AG04450 (cell line): ENCODE measurements at regions of chr6 and their contacts with region 1.

Region 1: GRCh38 chr6:154675602-154676088 is 57.6 kb upstream of the SCAF8 start:
- DNase-seq: peak; percentile 94
- H3K4me3 ChIP-seq: no peak overlapping the region
- H3K27ac ChIP-seq: no peak overlapping the region
- H3K27me3 ChIP-seq: no peaks in the 10 kb centered on the region
- CTCF ChIP-seq: peak; percentile 99

Region 2: GRCh38 chr6:154156135-154156896 is 519.3 kb before region 1 on chr6:
- CTCF ChIA-PET with region 1: interaction called, 16 read pairs
- POLR2A ChIA-PET with region 1: no interaction called
- DNase-seq: no peak
- H3K4me3 ChIP-seq: no peak overlapping the region
- H3K27ac ChIP-seq: no peak overlapping the region
- H3K27me3 ChIP-seq: peaks cover 5% of the 10 kb centered on the region
- CTCF ChIP-seq: peak; percentile 79

Region 3: GRCh38 chr6:154638369-154638768 is 37.3 kb before region 1 on chr6:
- CTCF ChIA-PET with region 1: no interaction called
- POLR2A ChIA-PET with region 1: no interaction called
- DNase-seq: no peak
- H3K4me3 ChIP-seq: no peak overlapping the region
- H3K27ac ChIP-seq: no peak overlapping the region
- H3K27me3 ChIP-seq: peaks cover 3% of the 10 kb centered on the region
- CTCF ChIP-seq: no peak

Region 4: GRCh38 chr6:154690857-154691256 is 15.2 kb after region 1 on chr6:
- CTCF ChIA-PET with region 1: interaction called, 19 read pairs
- POLR2A ChIA-PET with region 1: no interaction called
- DNase-seq: no peak
- H3K4me3 ChIP-seq: no peak overlapping the region
- H3K27ac ChIP-seq: no peak overlapping the region
- H3K27me3 ChIP-seq: no peaks in the 10 kb centered on the region
- CTCF ChIP-seq: no peak

Region 5: GRCh38 chr6:154805288-154805911 is 129.8 kb after region 1 on chr6:
- CTCF ChIA-PET with region 1: interaction called, 304 read pairs
- POLR2A ChIA-PET with region 1: no interaction called
- DNase-seq: peak; percentile 32
- H3K4me3 ChIP-seq: no peak overlapping the region
- H3K27ac ChIP-seq: no peak overlapping the region
- H3K27me3 ChIP-seq: no peaks in the 10 kb centered on the region
- CTCF ChIP-seq: peak; percentile 57

Region 6: DNA sequence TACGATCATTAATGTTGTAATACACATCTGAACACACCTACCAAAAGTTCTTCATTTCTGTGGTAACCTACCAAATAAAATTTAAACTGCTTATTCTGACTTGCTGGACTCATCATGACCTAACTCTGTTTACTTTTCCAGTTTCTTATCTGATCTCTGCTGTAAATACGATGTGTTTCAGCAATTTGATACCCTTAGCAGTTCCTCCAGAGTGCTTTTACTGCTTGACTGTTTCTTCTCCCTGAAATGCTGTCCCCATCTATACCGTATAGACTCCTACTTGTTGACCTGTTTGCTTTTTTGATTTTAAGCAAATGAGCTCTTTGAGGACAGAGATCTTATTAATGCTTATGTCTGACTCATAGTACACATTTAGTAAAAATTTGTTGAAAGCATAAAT is 177.0 kb after region 1 on chr6:
- CTCF ChIA-PET with region 1: interaction called, 30 read pairs
- POLR2A ChIA-PET with region 1: no interaction called
- DNase-seq: peak; percentile 44
- H3K4me3 ChIP-seq: no peak overlapping the region
- H3K27ac ChIP-seq: no peak overlapping the region
- H3K27me3 ChIP-seq: no peaks in the 10 kb centered on the region
- CTCF ChIP-seq: no peak

Region 7: DNA sequence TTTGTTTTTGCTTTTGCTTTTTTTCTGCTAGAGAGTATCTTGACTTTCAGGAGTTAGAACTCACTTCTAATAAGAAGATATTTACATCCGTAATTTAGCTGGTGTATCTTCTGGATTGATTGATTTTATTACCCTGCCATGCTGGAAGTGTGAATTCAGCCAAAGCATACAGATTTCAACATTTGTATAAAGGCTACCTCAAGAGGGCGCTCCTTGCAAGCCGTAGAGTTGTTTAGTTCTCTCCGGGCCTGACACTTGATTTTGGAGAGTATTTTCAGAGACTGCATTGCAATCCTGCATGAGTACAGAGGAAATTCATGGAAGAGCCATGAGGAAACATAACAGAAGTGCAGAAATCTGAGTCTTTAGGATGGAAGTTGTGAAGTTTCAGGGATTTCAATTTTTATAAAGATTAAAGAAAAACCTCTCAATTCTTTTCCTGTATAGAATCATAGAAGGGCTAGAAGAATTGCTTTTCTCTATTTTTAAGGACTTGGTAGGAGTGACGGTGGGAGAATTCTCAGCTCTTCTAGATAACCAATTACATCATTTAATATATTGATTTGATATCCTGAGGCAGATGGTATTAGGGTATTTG is 252.8 kb after region 1 on chr6:
- CTCF ChIA-PET with region 1: interaction called, 27 read pairs
- POLR2A ChIA-PET with region 1: no interaction called
- DNase-seq: peak; percentile 50
- H3K4me3 ChIP-seq: no peak overlapping the region
- H3K27ac ChIP-seq: no peak overlapping the region
- H3K27me3 ChIP-seq: no peaks in the 10 kb centered on the region
- CTCF ChIP-seq: peak; percentile 88